ENCODE measurements at regions of chr11 and their contacts with region 1.

Region 1: DNA sequence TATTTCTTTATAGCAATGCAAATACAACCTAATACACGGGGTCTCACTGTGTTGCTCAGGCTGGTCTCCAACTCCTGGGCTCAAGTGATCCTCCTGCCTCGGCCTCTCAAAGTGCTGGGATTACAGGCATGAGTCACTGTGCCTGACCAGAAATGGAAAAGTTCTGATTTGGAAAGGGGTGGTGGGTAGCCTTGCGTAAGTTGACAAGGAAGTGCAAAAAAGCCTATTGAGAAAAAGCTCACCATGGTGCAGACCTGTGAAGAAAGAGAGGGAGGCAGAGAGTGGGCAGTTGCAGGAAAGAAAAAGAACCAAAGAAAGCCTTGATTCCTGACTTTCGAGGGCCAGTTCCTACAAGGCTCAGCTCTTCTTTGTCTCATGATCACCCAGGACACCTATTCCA is 27.1 kb downstream of the AGBL2 start:
- DNase-seq: no peak
- ATAC-seq: no peak
- H3K4me3 ChIP-seq: no peak overlapping the region
- H3K4me3 Mint-ChIP-seq: no peak overlapping the region
- H3K27ac ChIP-seq: no peak overlapping the region
- H3K27ac Mint-ChIP-seq: no peak overlapping the region
- H3K4me1 ChIP-seq: no peaks in the 10 kb centered on the region
- H3K4me1 Mint-ChIP-seq: peaks cover 0 to 6% (median 0%) of the 10 kb centered on the region in 7 donors
- H3K27me3 ChIP-seq: no peaks in the 10 kb centered on the region
- H3K27me3 Mint-ChIP-seq: no peaks in the 10 kb centered on the region

Region 2: GRCh38 chr11:47329987-47330931 is 357.9 kb before region 1 on chr11:
- CTCF ChIA-PET with region 1: no interaction called
- POLR2A ChIA-PET with region 1: no interaction called
- intact Hi-C with region 1: no loop called
- DNase-seq: peak in 2 of 9 donors; percentile 11 to 13
- ATAC-seq: no peak
- H3K4me3 ChIP-seq: no peak overlapping the region
- H3K4me3 Mint-ChIP-seq: no peak overlapping the region
- H3K27ac ChIP-seq: no peak overlapping the region
- H3K27ac Mint-ChIP-seq: peak overlapping the region in 4 of 9 donors; percentile 5 to 67 (median 51)
- H3K4me1 ChIP-seq: no peaks in the 10 kb centered on the region
- H3K4me1 Mint-ChIP-seq: no peaks in the 10 kb centered on the region
- H3K27me3 ChIP-seq: no peaks in the 10 kb centered on the region
- H3K27me3 Mint-ChIP-seq: no peaks in the 10 kb centered on the region

Region 3: DNA sequence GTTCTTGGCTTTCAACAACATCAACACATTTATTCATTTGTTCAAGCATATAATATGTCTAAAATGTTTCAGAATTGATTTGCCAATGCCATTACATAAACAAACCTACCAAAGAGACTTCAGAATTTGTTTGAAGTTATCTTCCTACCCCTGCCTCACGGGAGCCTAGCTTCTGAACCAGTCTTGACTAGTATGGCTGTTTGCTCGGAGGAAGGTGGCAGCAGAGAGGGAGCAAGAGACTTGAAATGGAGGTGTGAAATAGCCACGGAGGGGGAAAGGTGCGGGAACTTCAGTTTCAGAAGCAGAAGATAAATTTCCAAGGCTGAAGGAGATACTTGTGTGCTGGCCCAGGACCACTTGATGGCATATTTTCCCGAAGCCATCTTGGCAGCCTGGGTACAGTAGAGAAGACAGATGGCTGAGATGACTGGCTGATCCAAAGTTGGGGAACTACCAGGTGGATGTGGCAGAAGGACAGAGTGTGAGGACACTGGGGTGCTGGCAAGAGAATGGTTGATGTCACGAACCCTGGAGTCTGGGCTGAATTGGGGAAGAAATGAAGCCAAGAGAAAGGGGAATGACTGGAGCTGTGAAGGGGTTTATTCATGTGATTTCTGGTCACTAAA is 31.7 kb before region 1 on chr11:
- CTCF ChIA-PET with region 1: no interaction called
- POLR2A ChIA-PET with region 1: interaction called, 12 read pairs
- intact Hi-C with region 1: no loop called
- DNase-seq: no peak
- ATAC-seq: no peak
- H3K4me3 ChIP-seq: no peak overlapping the region
- H3K4me3 Mint-ChIP-seq: no peak overlapping the region
- H3K27ac ChIP-seq: no peak overlapping the region
- H3K27ac Mint-ChIP-seq: peak overlapping the region in 1 of 9 donors; percentile 5
- H3K4me1 ChIP-seq: no peaks in the 10 kb centered on the region
- H3K4me1 Mint-ChIP-seq: no peaks in the 10 kb centered on the region
- H3K27me3 ChIP-seq: no peaks in the 10 kb centered on the region
- H3K27me3 Mint-ChIP-seq: peaks cover 0 to 4% (median 0%) of the 10 kb centered on the region in 5 donors

Measured in naive thymus-derived CD4-positive, alpha-beta T cell (primary cell).